Aorta (tissue), 5 donors: ENCODE measurements at regions of chr3 and their contacts with region 1.

Region 1: GRCh38 chr3:161187046-161187445 is 34.1 kb upstream of the NMD3 start:
- DNase-seq: no peak
- ATAC-seq: no peak
- H3K4me3 ChIP-seq: no peak overlapping the region
- H3K27ac ChIP-seq: no peak overlapping the region
- H3K4me1 ChIP-seq: no peaks in the 10 kb centered on the region
- H3K27me3 ChIP-seq: no peaks in the 10 kb centered on the region

Region 2: DNA sequence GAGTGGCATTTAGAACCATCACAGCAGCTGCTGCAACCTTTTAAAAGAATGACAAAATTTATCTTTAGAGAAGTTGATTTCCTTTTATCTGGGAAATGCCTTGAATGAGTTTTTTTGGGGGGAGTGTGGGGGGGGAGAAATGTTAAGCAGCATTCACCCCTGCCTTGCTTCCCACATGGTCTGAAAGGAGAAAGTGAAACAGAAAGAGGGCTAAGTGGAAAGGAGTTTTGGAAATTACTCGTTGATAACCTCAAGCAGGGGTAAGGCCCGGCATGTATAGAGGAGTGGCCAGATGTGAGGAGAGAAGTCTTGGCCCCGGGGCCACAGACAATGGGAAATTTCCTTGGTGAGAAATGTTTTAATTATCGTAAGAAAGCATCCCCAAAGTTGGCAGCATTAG is 105.4 kb before region 1 on chr3:
- intact Hi-C with region 1: no loop called
- DNase-seq: no peak
- ATAC-seq: no peak
- H3K4me3 ChIP-seq: no peak overlapping the region
- H3K27ac ChIP-seq: no peak overlapping the region
- H3K4me1 ChIP-seq: peaks cover 0 to 4% of the 10 kb centered on the region in 2 donors
- H3K27me3 ChIP-seq: no peaks in the 10 kb centered on the region

Region 3: DNA sequence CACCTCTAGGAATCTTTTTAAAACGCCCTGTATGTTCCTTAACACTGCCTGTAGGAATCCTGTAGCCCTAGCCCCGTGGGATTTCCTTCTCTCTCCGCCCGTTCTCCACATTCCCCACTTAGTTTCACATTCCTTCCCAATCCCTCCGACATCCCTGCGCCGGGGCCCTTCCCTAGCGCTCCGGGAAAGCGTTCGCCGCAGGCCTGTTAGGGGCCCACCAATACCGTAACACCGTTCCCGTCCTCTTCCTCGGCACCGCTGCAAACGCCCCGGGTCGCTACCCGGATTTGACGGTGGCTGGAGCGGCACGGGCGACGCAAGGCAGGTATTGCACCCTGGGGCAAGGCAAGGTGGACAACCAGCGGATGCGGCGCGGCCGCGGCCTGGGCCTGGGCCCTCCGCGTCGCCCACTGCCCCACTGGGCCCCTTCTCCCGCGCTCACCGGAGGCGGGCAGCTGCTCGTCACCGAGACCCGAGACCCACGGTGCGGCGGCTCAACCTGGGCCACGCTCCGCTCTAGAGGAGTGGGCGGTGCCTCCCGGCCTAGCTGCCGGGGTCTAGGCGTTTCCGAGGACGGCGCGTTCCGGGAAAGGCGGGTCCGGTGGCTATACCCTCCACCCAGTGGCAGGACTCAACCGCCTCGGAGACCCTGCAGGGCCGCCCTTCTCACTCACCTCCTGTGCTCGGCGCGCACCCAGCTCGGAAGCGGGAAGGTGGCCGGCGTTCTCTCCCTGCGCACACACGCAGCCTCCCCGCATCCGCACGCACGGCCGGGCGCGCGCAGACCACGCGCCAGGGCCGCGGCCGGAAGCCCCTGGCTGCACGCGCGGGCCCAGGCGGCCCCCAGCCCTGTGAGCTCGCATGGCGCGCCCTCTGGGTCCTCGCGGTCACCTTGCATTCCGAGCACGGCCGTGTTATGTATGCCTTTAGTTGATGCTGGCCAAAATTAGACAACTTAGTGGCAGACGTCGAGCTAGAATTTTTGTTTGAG is 82.2 kb before region 1 on chr3 and contains the start of gene B3GALNT1:
- intact Hi-C with region 1: loop called in 1 of 2 experiments (anchors 10 kb)
- DNase-seq: peak; percentile 68 to 85
- ATAC-seq: peak; percentile 88
- H3K4me3 ChIP-seq: peak within 1 kb of the TSS; percentile 52
- H3K27ac ChIP-seq: peak within 1 kb of the TSS in 1 of 2 donors; percentile 43
- H3K4me1 ChIP-seq: peaks cover 0 to 2% of the 10 kb centered on the region in 2 donors
- H3K27me3 ChIP-seq: no peaks in the 10 kb centered on the region
- total RNA-seq, gene B3GALNT1: 11.8 to 19.2 TPM